ENCODE measurements at regions of chr3 and their contacts with region 1.

Region 1: DNA sequence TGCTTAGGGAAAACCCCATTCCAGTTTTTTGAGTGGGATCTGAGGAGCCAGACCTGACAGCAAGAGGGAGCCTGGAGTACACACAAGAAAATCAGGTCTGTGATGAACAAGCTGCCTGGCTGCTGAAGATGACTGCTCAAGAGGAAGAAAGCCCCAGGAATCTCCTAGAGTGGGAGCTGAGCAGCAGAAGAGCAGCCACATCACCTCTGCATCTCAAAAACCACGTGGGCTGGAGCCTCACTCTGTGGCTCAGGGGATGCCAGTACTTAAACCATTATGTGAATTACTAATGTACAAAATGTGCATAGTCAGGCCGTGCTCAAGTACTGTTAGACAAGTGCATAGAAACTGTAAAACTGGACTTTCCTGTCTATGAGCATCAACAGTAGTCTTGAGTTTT is 52.4 kb downstream of the SLC9A9 start:
- DNase-seq: peak in 1 of 2 experiments; percentile 14
- H3K4me3 ChIP-seq: no peak overlapping the region
- H3K27ac ChIP-seq: no peak overlapping the region
- H3K4me1 ChIP-seq: no peaks in the 10 kb centered on the region
- H3K27me3 ChIP-seq: no peaks in the 10 kb centered on the region
- CTCF ChIP-seq: no peak

Region 2: GRCh38 chr3:143192193-143192592 is 603.7 kb before region 1 on chr3:
- CTCF ChIA-PET with region 1: no interaction called
- POLR2A ChIA-PET with region 1: no interaction called
- intact Hi-C with region 1: no loop called
- DNase-seq: no peak
- H3K4me3 ChIP-seq: no peak overlapping the region
- H3K27ac ChIP-seq: no peak overlapping the region
- H3K4me1 ChIP-seq: no peaks in the 10 kb centered on the region
- H3K27me3 ChIP-seq: no peaks in the 10 kb centered on the region
- CTCF ChIP-seq: no peak

Region 3: GRCh38 chr3:143831208-143831607 is 35.3 kb after region 1 on chr3:
- CTCF ChIA-PET with region 1: no interaction called
- POLR2A ChIA-PET with region 1: no interaction called
- intact Hi-C with region 1: loop called (anchors 2 kb)
- DNase-seq: peak; percentile 14 to 63
- H3K4me3 ChIP-seq: no peak overlapping the region; the same call in 1 of the 2 replicates
- H3K27ac ChIP-seq: peak overlapping the region; percentile 67
- H3K4me1 ChIP-seq: peaks cover 35% of the 10 kb centered on the region
- H3K27me3 ChIP-seq: no peaks in the 10 kb centered on the region
- CTCF ChIP-seq: no peak

Region 4: DNA sequence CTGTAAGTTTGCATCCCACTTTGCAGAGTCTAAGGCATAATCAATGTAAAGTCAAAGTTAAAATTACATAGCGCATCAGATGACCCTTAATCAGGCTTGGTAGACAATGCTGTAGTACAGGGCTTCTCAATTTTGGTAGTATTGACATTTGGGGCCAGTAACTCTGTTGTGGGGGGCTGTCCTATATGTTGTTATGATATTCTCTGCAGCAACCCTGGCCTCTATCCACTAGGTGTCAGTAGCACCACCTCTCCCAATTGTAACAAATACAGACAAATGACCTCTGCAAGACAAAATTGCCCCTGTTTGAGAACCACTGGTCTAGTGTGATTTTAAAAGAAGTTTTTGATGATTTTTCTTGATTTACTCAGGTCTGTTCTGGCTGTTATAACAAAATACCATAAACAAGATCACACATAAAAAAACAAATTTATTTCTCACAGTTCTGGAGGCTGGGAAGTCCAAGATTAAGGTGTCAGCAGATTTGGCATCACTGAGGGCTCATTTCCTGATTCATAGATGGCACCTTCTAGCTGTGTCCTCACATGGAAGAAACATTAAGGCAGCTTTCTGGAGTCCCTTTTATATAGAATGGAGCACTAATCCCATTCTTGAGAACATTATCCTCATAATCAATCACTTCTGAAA is 90.0 kb after region 1 on chr3:
- CTCF ChIA-PET with region 1: no interaction called
- POLR2A ChIA-PET with region 1: no interaction called
- intact Hi-C with region 1: loop called (anchors 5 kb)
- DNase-seq: no peak
- H3K4me3 ChIP-seq: no peak overlapping the region
- H3K27ac ChIP-seq: no peak overlapping the region
- H3K4me1 ChIP-seq: no peaks in the 10 kb centered on the region
- H3K27me3 ChIP-seq: no peaks in the 10 kb centered on the region
- CTCF ChIP-seq: peak; percentile 81